ENCODE measurements at regions of chr20 and their contacts with region 1.

Region 1: GRCh38 chr20:22691369-22692118 is 107.2 kb upstream of the FOXA2 start:
- DNase-seq: peak; percentile 78
- CTCF ChIP-seq: peak; percentile 86

Region 2: DNA sequence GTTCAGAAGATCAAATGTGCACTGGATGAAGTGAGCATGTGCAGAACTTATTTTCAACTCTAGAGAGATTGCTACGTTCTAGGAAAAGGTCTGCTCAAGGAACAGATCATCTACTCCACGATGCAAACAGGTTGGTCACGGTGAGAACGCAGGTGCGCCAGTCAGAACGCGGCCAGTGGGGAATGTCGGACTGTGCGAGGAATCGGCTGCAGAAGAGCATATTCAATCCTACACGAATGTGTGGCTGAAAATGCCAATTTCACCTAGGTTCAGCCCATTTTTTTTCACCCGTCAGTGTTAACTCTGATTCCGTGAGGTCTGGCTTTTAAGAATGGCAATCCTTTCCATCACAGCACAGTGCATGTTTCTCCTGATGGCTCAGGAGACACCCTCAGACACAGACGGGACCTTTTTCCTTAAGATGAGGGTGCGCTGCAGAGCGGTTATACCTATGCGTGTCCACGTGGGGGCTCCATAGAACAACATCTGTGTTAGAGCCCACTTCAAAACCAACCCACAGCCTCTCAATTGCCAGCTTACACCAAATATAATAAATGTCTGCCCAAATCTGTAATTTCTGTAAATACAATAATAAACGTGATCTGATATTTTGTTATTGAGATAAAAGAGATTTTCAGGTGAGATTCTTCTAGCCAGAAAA is 357.5 kb before region 1 on chr20:
- CTCF ChIA-PET with region 1: interaction called, 77 read pairs
- POLR2A ChIA-PET with region 1: no interaction called
- DNase-seq: peak; percentile 69
- CTCF ChIP-seq: peak; percentile 60

Region 3: DNA sequence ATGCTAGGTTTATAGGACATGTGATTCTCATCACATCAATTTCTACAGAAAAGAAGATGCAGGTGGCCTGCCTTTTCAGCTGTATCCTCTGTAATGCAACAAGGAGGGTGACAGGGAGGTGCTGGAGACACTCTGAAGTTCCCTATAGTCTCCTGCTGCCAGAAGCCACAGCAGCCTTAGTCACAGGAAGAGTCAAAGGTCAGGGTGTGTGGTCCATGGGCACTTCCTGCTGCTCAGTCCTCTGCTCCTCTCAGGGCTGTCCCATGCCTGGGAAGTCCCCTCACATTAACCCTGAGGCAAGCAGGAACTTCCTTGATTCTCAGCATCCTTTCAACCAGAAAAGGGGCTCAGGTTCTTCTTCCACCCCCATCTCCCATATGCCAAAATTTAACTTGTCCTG is 37.6 kb after region 1 on chr20:
- CTCF ChIA-PET with region 1: interaction called, 12 read pairs
- POLR2A ChIA-PET with region 1: no interaction called
- DNase-seq: no peak
- CTCF ChIP-seq: no peak

Region 4: DNA sequence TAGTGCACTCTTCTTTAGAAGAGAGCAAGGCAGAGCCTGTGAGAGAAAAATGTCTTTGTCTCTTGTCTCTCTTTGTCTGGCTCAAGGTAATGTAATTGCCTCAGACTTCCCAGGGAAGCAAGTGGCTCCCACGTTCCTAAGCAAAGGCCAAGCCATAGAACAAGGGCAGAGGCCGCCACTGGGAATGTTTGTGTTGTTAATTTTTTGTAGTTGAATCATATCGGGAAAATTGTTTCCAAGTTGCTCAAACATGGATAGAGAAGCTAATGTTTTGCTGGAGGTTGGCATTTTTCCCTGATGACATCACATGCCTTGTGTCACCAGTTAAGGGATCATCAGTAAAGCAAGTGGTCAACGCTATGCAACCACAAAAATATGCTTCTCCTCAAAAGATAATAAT is 104.3 kb after region 1 on chr20:
- CTCF ChIA-PET with region 1: no interaction called
- POLR2A ChIA-PET with region 1: no interaction called
- DNase-seq: no peak
- CTCF ChIP-seq: no peak

Region 5: GRCh38 chr20:23200918-23201317 is 509.4 kb after region 1 on chr20:
- CTCF ChIA-PET with region 1: interaction called, 10 read pairs
- POLR2A ChIA-PET with region 1: no interaction called
- DNase-seq: peak; percentile 27
- CTCF ChIP-seq: peak; percentile 11

Region 6: DNA sequence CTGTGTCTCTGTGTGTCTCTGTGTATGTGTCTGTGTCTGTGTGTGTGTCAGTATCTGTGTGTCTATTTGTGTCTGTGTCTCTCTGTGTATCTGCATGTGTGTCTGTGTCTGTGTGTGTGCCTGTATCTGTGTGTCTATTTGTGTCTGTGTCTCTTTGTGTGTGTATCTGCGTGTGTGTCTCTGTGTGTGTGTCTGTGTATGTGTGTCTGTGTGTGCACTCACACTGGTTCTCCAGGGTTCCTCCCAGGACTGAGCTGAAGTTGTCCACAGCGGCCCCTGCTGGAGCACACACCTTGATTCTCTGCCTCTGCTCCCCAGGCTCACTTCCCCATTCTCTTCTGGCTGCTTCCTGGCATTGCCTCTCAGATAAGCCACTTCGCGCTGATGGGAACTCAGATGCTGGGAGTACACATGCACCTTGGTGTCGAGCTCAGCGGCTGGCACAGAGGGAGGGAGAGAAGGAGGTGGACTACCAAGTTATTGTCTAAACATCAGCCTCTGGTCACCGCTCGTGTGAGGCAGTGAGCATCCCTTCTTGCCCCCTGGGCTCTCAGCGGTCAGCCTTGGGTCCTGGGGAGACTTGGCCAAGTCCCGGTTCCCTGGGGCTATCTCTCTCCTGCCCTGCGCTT is 554.1 kb after region 1 on chr20:
- CTCF ChIA-PET with region 1: interaction called, 35 read pairs
- POLR2A ChIA-PET with region 1: no interaction called
- DNase-seq: peak; percentile 80
- CTCF ChIP-seq: peak; percentile 62

Region 7: GRCh38 chr20:23441850-23442313 is 750.3 kb after region 1 on chr20:
- CTCF ChIA-PET with region 1: interaction called, 19 read pairs
- POLR2A ChIA-PET with region 1: no interaction called
- DNase-seq: peak; percentile 80
- CTCF ChIP-seq: peak; percentile 79

Measured in GM10248 (cell line).